Thyroid gland (tissue), 4 donors: ENCODE measurements at regions of chr19 and their contacts with region 1.

Region 1: GRCh38 chr19:47256688-47257443 is 541 bp downstream of the CCDC9 start:
- DNase-seq: peak; percentile 100
- H3K4me3 ChIP-seq: peak overlapping the region in 2 of 3 donors; percentile 46 to 54
- H3K27ac ChIP-seq: peak overlapping the region; percentile 93 to 94 (median 93)
- H3K4me1 ChIP-seq: peaks cover 17 to 22% of the 10 kb centered on the region in 2 donors
- H3K27me3 ChIP-seq: no peaks in the 10 kb centered on the region
- CTCF ChIP-seq: no peak
- POLR2A ChIP-seq: no peak

Region 2: DNA sequence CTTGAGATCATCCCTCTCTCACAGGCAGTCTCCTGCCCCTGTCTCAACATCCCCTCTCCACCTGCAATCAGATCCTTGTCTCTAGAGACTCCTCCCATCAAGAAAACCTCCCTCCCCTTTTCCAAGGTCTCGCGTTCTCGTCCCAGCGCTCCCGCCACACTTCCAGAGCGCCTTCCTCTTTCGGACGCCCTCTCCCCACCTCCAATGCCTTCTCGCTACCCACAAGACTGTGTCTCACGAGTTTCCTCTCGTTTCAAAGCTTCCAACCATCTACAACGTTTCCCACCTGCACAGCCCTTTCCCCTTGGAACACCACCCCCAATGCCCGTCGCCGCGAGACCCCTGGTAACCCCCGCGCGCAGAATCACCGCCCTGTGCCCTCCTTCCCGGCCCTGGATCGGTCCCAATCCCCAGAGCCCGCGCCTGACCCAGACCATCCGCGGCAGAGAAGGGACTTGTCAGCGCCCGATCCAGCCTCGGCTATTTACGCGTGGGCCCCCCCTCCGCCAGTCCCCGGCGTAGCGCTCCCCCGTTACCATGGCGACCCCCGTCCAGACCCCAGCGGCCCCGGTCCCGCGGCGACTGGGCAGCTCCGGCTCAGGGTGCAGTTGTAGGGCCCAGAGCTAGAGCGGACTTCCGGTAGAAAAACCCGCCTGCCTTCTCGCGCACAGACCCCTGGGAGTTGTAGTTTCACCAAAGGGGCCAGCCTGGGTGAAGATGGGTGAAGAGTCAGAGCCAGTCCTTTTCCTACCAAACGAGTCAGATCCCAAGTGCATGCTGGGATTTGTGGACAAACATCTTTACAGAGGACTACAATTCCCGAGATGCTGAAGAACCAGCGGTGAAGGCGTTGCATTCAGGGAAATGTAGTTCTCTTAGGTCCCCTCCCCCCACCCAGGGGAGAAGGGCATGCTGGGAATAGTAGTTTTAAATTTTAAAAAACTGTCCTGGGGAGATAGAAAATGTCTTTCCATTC is 406.4 kb before region 1 on chr19 and contains the start of gene AP2S1:
- intact Hi-C with region 1: loop called (anchors 10 kb)
- DNase-seq: peak; percentile 95
- H3K4me3 ChIP-seq: peak within 1 kb of the TSS; percentile 59 to 85 (median 82)
- H3K27ac ChIP-seq: peak within 1 kb of the TSS; percentile 38 to 74 (median 59)
- H3K4me1 ChIP-seq: peaks cover 8 to 16% of the 10 kb centered on the region in 2 donors
- H3K27me3 ChIP-seq: no peaks in the 10 kb centered on the region
- CTCF ChIP-seq: no peak
- POLR2A ChIP-seq: peak in 1 of 2 donors; percentile 74
- total RNA-seq, gene AP2S1: 29.8 to 98.4 (median 64.1) TPM

Region 3: DNA sequence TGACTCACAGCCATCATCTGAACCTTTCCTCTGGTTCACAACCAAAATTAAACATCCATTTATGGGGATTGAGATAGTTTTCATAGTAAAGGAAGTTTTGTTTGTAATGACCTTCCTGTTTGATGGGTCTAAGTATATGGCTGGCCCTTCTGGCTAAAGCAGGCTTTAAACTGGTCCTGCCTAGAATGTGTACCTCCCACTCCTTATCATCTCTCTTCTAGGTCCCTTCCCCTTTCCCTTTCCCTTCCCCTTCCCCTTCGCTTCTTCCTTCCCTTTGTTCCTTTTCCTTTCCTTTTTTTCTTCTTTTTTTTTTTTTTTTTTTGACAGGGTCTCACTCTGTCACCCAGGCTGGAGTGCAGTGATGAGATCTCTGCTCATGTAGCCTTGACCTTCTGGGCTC is 61.4 kb before region 1 on chr19:
- intact Hi-C with region 1: no loop called
- DNase-seq: no peak
- H3K4me3 ChIP-seq: no peak overlapping the region
- H3K27ac ChIP-seq: no peak overlapping the region
- H3K4me1 ChIP-seq: peaks cover 23 to 28% of the 10 kb centered on the region in 2 donors
- H3K27me3 ChIP-seq: no peaks in the 10 kb centered on the region
- CTCF ChIP-seq: no peak
- POLR2A ChIP-seq: no peak

Region 4: GRCh38 chr19:47275791-47276461 is 19.1 kb after region 1 on chr19:
- intact Hi-C with region 1: loop called (anchors 2 kb)
- DNase-seq: peak; percentile 14 to 23
- H3K4me3 ChIP-seq: no peak overlapping the region
- H3K27ac ChIP-seq: peak overlapping the region in 2 of 3 donors; percentile 42 to 77
- H3K4me1 ChIP-seq: peaks cover 5 to 30% of the 10 kb centered on the region in 2 donors
- H3K27me3 ChIP-seq: no peaks in the 10 kb centered on the region
- CTCF ChIP-seq: no peak
- POLR2A ChIP-seq: no peak

Region 5: GRCh38 chr19:47398707-47399597 is 142.1 kb after region 1 on chr19:
- intact Hi-C with region 1: no loop called
- DNase-seq: no peak
- H3K4me3 ChIP-seq: no peak overlapping the region
- H3K27ac ChIP-seq: no peak overlapping the region
- H3K4me1 ChIP-seq: no peaks in the 10 kb centered on the region
- H3K27me3 ChIP-seq: no peaks in the 10 kb centered on the region
- CTCF ChIP-seq: no peak
- POLR2A ChIP-seq: no peak